Mammary epithelial cell (primary cell): ENCODE measurements at regions of chr16 and their contacts with region 1.

Region 1: GRCh38 chr16:88785106-88785924 is at the start of gene PIEZO1:
- DNase-seq: peak; percentile 47
- H3K4me3 ChIP-seq: peak within 1 kb of the TSS; percentile 57 to 76 (median 65)
- H3K27ac ChIP-seq: peak within 1 kb of the TSS; percentile 76
- H3K4me1 ChIP-seq: peaks cover 33% of the 10 kb centered on the region
- H3K27me3 ChIP-seq: no peaks in the 10 kb centered on the region
- CTCF ChIP-seq: peak; percentile 50 to 90
- total RNA-seq, gene PIEZO1: 165 to 215 TPM

Region 2: GRCh38 chr16:88527186-88527936 is 258.0 kb before region 1 on chr16:
- CTCF ChIA-PET with region 1: no interaction called
- dilution Hi-C with region 1: no loop called
- in situ Hi-C with region 1: no loop called
- intact Hi-C with region 1: no loop called
- DNase-seq: peak; percentile 23
- H3K4me3 ChIP-seq: no peak overlapping the region
- H3K27ac ChIP-seq: no peak overlapping the region
- H3K4me1 ChIP-seq: no peaks in the 10 kb centered on the region
- H3K27me3 ChIP-seq: no peaks in the 10 kb centered on the region
- CTCF ChIP-seq: peak; percentile 56 to 79

Region 3: GRCh38 chr16:88569985-88570690 is 215.2 kb before region 1 on chr16 and contains the start of gene ZC3H18:
- CTCF ChIA-PET with region 1: no interaction called
- dilution Hi-C with region 1: no loop called
- in situ Hi-C with region 1: no loop called
- intact Hi-C with region 1: loop called (anchors 5 kb)
- DNase-seq: peak; percentile 96
- H3K4me3 ChIP-seq: peak within 1 kb of the TSS; percentile 93 to 99 (median 99)
- H3K27ac ChIP-seq: peak within 1 kb of the TSS; percentile 41
- H3K4me1 ChIP-seq: peaks cover 23% of the 10 kb centered on the region
- H3K27me3 ChIP-seq: no peaks in the 10 kb centered on the region
- CTCF ChIP-seq: no peak
- total RNA-seq, gene ZC3H18: 9.0 to 48.2 TPM

Region 4: DNA sequence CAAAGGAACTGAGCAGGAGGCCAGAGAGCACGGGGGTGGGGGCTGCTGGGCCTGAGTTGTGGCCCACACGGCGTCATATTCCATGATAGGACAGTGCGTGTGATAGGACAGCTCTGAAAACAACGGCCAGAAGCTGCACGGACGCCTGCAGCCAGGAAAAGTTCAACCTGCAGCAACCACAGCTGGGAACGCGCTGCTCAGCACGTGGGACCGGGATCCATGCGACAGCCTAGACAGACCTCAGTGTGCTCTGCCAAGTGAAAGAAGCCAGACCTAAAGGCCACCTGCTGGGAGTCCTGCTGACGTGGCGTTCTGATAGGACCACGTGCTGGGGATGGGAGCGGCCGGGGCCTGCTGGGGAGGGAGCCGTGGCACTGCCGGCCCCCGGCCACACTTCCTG is 57.4 kb before region 1 on chr16:
- CTCF ChIA-PET with region 1: no interaction called
- dilution Hi-C with region 1: loop called (anchors 5 kb)
- in situ Hi-C with region 1: no loop called
- intact Hi-C with region 1: no loop called
- DNase-seq: no peak
- H3K4me3 ChIP-seq: no peak overlapping the region
- H3K27ac ChIP-seq: no peak overlapping the region
- H3K4me1 ChIP-seq: no peaks in the 10 kb centered on the region
- H3K27me3 ChIP-seq: no peaks in the 10 kb centered on the region
- CTCF ChIP-seq: no peak

Region 5: DNA sequence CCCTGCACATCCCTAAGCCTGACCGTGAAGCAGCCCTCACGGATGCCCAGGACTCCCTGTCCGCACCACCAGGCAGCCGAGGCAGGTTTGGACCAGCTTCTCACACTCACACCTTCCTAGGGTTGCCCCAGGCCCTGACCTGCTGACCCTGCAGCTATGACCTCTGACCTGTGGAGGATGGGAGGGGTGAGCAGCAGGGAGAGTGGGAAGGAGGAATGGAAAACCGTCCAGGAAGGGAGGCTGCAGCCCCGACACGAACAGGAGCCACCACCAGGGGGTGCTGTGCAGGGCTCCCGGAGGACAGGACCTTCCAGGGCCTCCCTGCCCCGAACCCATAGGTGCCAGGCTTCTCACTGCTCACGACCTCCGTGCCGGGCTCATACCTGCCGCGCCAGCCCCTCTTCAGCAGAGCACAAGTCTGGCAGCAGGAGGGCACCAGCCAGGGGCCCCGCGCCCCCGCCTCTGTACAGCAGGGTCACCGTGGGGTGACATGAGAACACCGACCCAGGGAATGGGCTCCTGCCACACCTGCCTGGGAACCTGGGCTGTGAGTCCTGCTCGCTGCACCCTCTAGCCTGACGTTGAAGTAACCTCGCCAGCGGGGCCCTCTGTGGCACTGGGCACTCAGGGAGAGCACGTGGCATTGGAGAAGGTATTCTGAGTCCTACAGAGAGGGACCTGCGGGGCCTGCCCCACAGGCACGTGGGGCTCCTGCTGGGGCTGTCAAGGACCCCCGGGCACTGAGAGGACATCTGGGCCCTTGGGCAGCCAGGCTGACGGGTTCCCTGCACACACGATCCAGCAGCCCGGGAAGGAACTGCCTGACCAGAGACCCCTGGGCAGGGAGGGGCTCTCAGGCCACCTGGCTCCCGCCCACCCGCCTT is 41.4 kb before region 1 on chr16:
- CTCF ChIA-PET with region 1: no interaction called
- dilution Hi-C with region 1: no loop called
- in situ Hi-C with region 1: loop called in 1 of 2 experiments (anchors 5 kb)
- intact Hi-C with region 1: loop called (anchors 1 kb)
- DNase-seq: peak; percentile 39
- H3K4me3 ChIP-seq: no peak overlapping the region
- H3K27ac ChIP-seq: no peak overlapping the region
- H3K4me1 ChIP-seq: peaks cover 4% of the 10 kb centered on the region
- H3K27me3 ChIP-seq: no peaks in the 10 kb centered on the region
- CTCF ChIP-seq: peak; percentile 74 to 86

Region 6: GRCh38 chr16:88770461-88771293 is 14.6 kb before region 1 on chr16:
- CTCF ChIA-PET with region 1: no interaction called
- dilution Hi-C with region 1: no loop called
- in situ Hi-C with region 1: no loop called
- intact Hi-C with region 1: loop called (anchors 1 kb)
- DNase-seq: peak; percentile 79
- H3K4me3 ChIP-seq: peak overlapping the region in 2 of 3 experiments; percentile 27 to 30
- H3K27ac ChIP-seq: peak overlapping the region; percentile 52
- H3K4me1 ChIP-seq: peaks cover 74% of the 10 kb centered on the region
- H3K27me3 ChIP-seq: no peaks in the 10 kb centered on the region
- CTCF ChIP-seq: peak in 1 of 2 donors; percentile 5

Region 7: GRCh38 chr16:89115216-89115861 is 330.0 kb after region 1 on chr16:
- CTCF ChIA-PET with region 1: no interaction called
- dilution Hi-C with region 1: loop called (anchors 5 kb)
- in situ Hi-C with region 1: no loop called
- intact Hi-C with region 1: no loop called
- DNase-seq: peak; percentile 61
- H3K4me3 ChIP-seq: no peak overlapping the region
- H3K27ac ChIP-seq: no peak overlapping the region
- H3K4me1 ChIP-seq: peaks cover 17% of the 10 kb centered on the region
- H3K27me3 ChIP-seq: no peaks in the 10 kb centered on the region
- CTCF ChIP-seq: no peak

Region 8: DNA sequence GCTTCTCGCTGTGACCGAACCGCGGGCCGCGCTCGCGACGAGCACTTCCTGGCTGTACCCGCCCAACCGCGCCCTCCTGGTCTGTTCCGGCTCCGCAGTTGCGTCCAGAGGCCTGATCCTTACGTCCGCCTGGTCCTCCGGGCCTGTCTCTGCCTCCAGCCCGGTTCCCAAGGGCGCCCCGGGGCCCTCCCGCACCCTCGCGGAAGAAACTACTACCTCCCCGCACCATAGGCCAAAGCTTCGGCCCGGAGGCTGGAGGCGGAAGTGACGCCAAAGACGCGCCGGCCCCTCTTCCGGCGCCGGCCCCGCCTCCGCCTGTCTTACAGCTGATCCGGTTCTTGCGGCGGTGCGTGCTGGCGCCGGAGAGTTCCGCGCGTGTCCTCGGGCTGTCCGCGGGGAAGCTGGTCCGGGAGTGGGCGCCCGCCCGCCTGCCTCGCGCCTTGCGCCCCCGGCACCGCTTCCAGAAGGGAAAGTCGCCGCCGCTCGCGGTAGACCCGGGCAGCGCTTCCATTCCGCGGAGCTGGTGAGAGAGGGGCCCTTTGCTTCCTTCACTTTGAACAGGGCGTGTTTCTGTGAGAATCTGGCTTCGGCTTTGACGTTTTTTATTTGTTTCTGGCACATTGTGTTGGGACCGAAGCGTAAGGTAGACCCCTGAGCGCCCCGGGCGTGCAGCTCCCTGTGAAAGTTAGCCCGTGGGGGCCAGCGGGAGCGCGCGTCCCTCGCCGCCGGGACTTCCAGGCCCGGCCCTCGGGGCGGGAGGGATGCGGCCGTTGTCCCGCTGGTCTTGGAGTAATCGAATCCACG is 432.3 kb after region 1 on chr16 and contains the start of gene ZNF778:
- CTCF ChIA-PET with region 1: no interaction called
- dilution Hi-C with region 1: loop called (anchors 5 kb)
- in situ Hi-C with region 1: no loop called
- intact Hi-C with region 1: no loop called
- DNase-seq: peak; percentile 84
- H3K4me3 ChIP-seq: peak within 1 kb of the TSS; percentile 86 to 95 (median 90)
- H3K27ac ChIP-seq: peak within 1 kb of the TSS; percentile 67
- H3K4me1 ChIP-seq: peaks cover 13% of the 10 kb centered on the region
- H3K27me3 ChIP-seq: no peaks in the 10 kb centered on the region
- CTCF ChIP-seq: no peak
- total RNA-seq, gene ZNF778: 8.5 to 10.2 TPM